Activated CD4-positive, alpha-beta T cell treated with anti-CD3 and anti-CD28 coated beads for 36 hours (primary cell): ENCODE measurements at regions of chr15 and their contacts with region 1.

Region 1: DNA sequence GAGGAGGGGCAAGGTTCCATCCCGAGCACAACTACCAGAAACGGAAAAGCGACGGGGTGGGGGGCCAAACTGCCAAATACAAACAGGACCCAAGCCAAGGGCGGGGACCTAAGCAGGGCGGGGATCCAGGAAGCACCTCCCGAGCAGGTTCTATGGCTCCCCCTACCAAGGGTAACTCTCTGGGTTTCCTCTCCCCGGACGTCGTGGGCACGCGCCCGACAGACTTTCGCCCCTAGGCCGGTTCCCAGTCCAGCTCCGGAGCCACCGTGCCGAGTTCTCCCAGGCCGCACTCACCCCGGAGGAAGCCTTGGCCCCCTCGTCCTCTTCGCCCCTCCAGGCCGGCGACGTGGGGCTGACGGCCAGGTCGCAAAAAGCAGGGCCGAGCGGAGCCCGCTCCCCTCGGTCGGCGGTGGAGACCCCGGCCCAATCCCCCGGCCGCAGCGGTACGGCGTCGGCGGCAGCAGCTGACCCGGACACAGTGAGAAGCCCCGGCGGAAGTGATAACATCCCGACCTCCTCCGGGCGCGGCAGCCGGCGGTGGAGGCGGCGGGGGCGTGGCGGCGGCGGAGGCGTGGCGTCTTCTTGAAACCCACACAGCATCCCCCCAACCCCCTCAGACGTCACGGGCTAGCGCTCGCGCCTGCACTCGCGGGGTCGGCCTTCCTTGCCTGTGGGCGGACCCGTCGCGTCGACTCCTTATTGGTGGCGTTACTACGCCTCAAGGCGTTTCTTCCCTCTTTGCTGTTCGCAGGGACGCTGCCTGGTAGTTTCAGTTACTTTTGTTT is at the start of gene BNIP2:
- DNase-seq: peak; percentile 99
- ATAC-seq: peak; percentile 87
- H3K4me3 Mint-ChIP-seq: peak within 1 kb of the TSS; percentile 80
- H3K27ac Mint-ChIP-seq: peak within 1 kb of the TSS; percentile 98
- H3K4me1 Mint-ChIP-seq: peaks cover 41% of the 10 kb centered on the region
- H3K27me3 Mint-ChIP-seq: no peaks in the 10 kb centered on the region
- total RNA-seq, gene BNIP2: 51.9 to 61.5 TPM

Region 2: GRCh38 chr15:59116141-59116540 is 572.9 kb before region 1 on chr15:
- CTCF ChIA-PET with region 1: no interaction called
- POLR2A ChIA-PET with region 1: no interaction called
- intact Hi-C with region 1: no loop called
- DNase-seq: no peak
- ATAC-seq: no peak
- H3K4me3 Mint-ChIP-seq: no peak overlapping the region
- H3K27ac Mint-ChIP-seq: no peak overlapping the region
- H3K4me1 Mint-ChIP-seq: no peaks in the 10 kb centered on the region
- H3K27me3 Mint-ChIP-seq: no peaks in the 10 kb centered on the region

Region 3: GRCh38 chr15:59590027-59590426 is 99.0 kb before region 1 on chr15:
- CTCF ChIA-PET with region 1: interaction called, 3 read pairs
- POLR2A ChIA-PET with region 1: no interaction called
- intact Hi-C with region 1: loop called in 1 of 2 experiments (anchors 2 kb)
- DNase-seq: peak; percentile 30
- ATAC-seq: peak; percentile 91
- H3K4me3 Mint-ChIP-seq: peak overlapping the region; percentile 54
- H3K27ac Mint-ChIP-seq: peak overlapping the region; percentile 83
- H3K4me1 Mint-ChIP-seq: peaks cover 30% of the 10 kb centered on the region
- H3K27me3 Mint-ChIP-seq: peaks cover 4% of the 10 kb centered on the region

Region 4: DNA sequence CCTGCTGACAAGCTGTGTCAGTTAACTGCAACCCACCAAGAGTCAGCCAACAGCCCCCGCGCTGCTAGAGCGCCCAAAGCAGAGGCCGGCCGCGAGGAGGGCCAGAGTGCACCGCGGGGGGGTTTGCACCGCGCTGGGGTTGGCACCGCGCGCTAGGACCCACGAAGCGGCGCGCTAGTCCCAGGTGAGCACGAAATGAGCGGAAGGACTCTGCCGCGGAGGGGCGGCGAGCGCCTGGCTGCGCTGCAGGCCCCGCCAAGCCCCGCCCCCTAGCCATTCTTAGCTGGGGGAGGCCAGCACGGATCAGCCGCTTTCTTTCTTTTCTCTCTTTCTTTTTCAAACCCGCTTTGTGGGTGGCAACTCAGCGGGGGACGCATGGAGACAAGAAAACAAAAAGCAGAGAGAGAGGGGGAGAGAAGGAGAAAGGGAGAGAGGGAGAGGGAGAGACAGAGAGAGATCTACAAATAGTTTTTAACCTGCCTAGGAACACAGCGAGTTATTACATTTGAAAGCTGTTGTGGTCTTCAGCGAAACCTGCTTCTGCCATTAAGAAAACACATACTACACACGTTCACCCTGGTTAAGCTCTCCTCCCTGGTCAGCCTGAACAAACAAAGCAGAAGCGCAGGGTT is 308.2 kb after region 1 on chr15:
- CTCF ChIA-PET with region 1: no interaction called
- POLR2A ChIA-PET with region 1: no interaction called
- intact Hi-C with region 1: loop called in 1 of 2 experiments (anchors 2 kb)
- DNase-seq: peak; percentile 84
- ATAC-seq: peak; percentile 88
- H3K4me3 Mint-ChIP-seq: peak overlapping the region; percentile 59
- H3K27ac Mint-ChIP-seq: no peak overlapping the region
- H3K4me1 Mint-ChIP-seq: peaks cover 48% of the 10 kb centered on the region
- H3K27me3 Mint-ChIP-seq: peaks cover 86% of the 10 kb centered on the region

Region 5: DNA sequence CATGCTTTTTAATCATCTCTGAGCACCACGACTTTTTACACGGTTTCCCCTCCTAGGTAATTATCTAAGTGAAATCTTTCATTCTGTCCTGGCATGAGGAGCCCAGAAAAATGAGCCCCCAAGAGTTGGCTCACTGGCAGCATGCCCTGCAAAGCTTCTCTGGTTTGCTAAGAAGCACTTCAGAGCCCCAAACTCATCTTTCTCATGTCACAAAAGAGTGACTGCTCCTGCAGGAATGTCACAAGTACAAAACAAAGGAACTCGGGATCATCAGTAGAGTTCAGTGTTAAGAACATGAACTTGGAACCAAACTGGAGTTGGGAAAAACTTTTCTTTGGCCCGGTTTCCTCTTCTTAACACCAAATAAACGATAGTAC is 439.0 kb after region 1 on chr15:
- CTCF ChIA-PET with region 1: no interaction called
- POLR2A ChIA-PET with region 1: no interaction called
- intact Hi-C with region 1: loop called in 1 of 2 experiments (anchors 5 kb)
- DNase-seq: no peak
- ATAC-seq: no peak
- H3K4me3 Mint-ChIP-seq: peak overlapping the region; percentile 70
- H3K27ac Mint-ChIP-seq: peak overlapping the region; percentile 85
- H3K4me1 Mint-ChIP-seq: peaks cover 54% of the 10 kb centered on the region
- H3K27me3 Mint-ChIP-seq: no peaks in the 10 kb centered on the region

Region 6: GRCh38 chr15:60326824-60327654 is 638.0 kb after region 1 on chr15:
- CTCF ChIA-PET with region 1: interaction called, 20 read pairs
- POLR2A ChIA-PET with region 1: no interaction called
- intact Hi-C with region 1: loop called (anchors 1 to 5 kb)
- DNase-seq: peak; percentile 52
- ATAC-seq: no peak
- H3K4me3 Mint-ChIP-seq: no peak overlapping the region
- H3K27ac Mint-ChIP-seq: no peak overlapping the region
- H3K4me1 Mint-ChIP-seq: peaks cover 2% of the 10 kb centered on the region
- H3K27me3 Mint-ChIP-seq: peaks cover 31% of the 10 kb centered on the region

Region 7: GRCh38 chr15:60478566-60479360 is 789.7 kb after region 1 on chr15 and contains the start of gene ICE2:
- CTCF ChIA-PET with region 1: no interaction called
- POLR2A ChIA-PET with region 1: no interaction called
- intact Hi-C with region 1: loop called (anchors 1 to 5 kb)
- DNase-seq: peak; percentile 98
- ATAC-seq: peak; percentile 93
- H3K4me3 Mint-ChIP-seq: peak within 1 kb of the TSS; percentile 91
- H3K27ac Mint-ChIP-seq: peak within 1 kb of the TSS; percentile 98
- H3K4me1 Mint-ChIP-seq: peaks cover 55% of the 10 kb centered on the region
- H3K27me3 Mint-ChIP-seq: no peaks in the 10 kb centered on the region
- total RNA-seq, gene ICE2: 72.8 to 81.6 TPM